CD4-positive, alpha-beta memory T cell (primary cell): ENCODE measurements at regions of chr19 and their contacts with region 1.

Region 1: GRCh38 chr19:4267101-4267900 is 11.8 kb upstream of the SHD start:
- DNase-seq: peak; percentile 41 to 57 (median 46)
- H3K4me3 ChIP-seq: no peak overlapping the region
- H3K4me3 Mint-ChIP-seq: no peak overlapping the region
- H3K27ac ChIP-seq: no peak overlapping the region
- H3K27ac Mint-ChIP-seq: peak overlapping the region in 6 of 7 donors; percentile 22 to 93 (median 76)
- H3K4me1 ChIP-seq: peaks cover 7% of the 10 kb centered on the region
- H3K4me1 Mint-ChIP-seq: peaks cover 12 to 19% (median 15%) of the 10 kb centered on the region in 4 donors
- H3K27me3 ChIP-seq: no peaks in the 10 kb centered on the region
- H3K27me3 Mint-ChIP-seq: no peaks in the 10 kb centered on the region

Region 2: GRCh38 chr19:4256563-4256962 is 10.7 kb before region 1 on chr19:
- CTCF ChIA-PET with region 1: interaction called, 10 read pairs
- POLR2A ChIA-PET with region 1: no interaction called
- intact Hi-C with region 1: no loop called
- DNase-seq: no peak
- H3K4me3 ChIP-seq: no peak overlapping the region
- H3K4me3 Mint-ChIP-seq: no peak overlapping the region
- H3K27ac ChIP-seq: no peak overlapping the region
- H3K27ac Mint-ChIP-seq: peak overlapping the region in 1 of 7 donors; percentile 38
- H3K4me1 ChIP-seq: no peaks in the 10 kb centered on the region
- H3K4me1 Mint-ChIP-seq: peaks cover 0 to 4% (median 3%) of the 10 kb centered on the region in 4 donors
- H3K27me3 ChIP-seq: no peaks in the 10 kb centered on the region
- H3K27me3 Mint-ChIP-seq: no peaks in the 10 kb centered on the region

Region 3: GRCh38 chr19:4310247-4311121 is 43.2 kb after region 1 on chr19:
- CTCF ChIA-PET with region 1: no interaction called
- POLR2A ChIA-PET with region 1: no interaction called
- intact Hi-C with region 1: no loop called
- DNase-seq: no peak
- H3K4me3 ChIP-seq: no peak overlapping the region
- H3K4me3 Mint-ChIP-seq: no peak overlapping the region
- H3K27ac ChIP-seq: no peak overlapping the region
- H3K27ac Mint-ChIP-seq: no peak overlapping the region
- H3K4me1 ChIP-seq: no peaks in the 10 kb centered on the region
- H3K4me1 Mint-ChIP-seq: peaks cover 0 to 4% (median 1%) of the 10 kb centered on the region in 4 donors
- H3K27me3 ChIP-seq: no peaks in the 10 kb centered on the region
- H3K27me3 Mint-ChIP-seq: peaks cover 0 to 6% of the 10 kb centered on the region in 2 donors

Region 4: DNA sequence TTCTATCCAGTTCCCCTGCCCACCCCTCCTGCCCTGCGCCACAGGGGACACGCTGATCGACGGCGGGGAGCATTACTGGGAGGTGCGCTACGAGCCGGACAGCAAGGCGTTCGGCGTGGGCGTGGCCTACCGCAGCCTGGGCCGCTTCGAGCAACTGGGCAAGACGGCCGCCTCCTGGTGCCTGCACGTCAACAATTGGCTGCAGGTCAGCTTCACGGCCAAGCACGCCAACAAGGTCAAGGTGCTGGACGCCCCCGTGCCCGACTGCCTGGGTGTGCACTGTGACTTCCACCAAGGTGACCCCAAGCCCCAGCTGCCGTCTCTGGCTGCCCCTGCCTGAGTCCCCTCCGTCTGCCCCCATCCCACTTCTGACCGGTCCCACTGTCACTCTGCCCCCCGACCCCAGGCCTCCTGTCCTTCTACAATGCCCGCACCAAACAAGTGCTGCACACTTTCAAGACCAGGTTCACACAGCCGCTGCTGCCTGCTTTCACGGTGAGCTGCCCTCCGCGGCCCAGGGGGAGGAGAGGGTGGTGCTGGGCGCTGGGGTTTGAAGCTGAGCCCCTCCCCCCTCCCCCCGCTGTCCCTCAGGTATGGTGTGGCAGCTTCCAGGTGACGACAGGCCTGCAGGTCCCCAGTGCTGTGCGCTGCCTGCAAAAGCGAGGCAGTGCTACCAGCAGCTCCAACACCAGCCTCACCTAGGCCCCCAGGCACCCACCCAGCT is 55.8 kb after region 1 on chr19:
- CTCF ChIA-PET with region 1: interaction called, 17 read pairs
- POLR2A ChIA-PET with region 1: no interaction called
- intact Hi-C with region 1: loop called (anchors 1 kb)
- DNase-seq: no peak
- H3K4me3 ChIP-seq: no peak overlapping the region
- H3K4me3 Mint-ChIP-seq: no peak overlapping the region
- H3K27ac ChIP-seq: no peak overlapping the region
- H3K27ac Mint-ChIP-seq: no peak overlapping the region
- H3K4me1 ChIP-seq: peaks cover 15% of the 10 kb centered on the region
- H3K4me1 Mint-ChIP-seq: peaks cover 8 to 18% (median 15%) of the 10 kb centered on the region in 4 donors
- H3K27me3 ChIP-seq: no peaks in the 10 kb centered on the region
- H3K27me3 Mint-ChIP-seq: no peaks in the 10 kb centered on the region

Region 5: DNA sequence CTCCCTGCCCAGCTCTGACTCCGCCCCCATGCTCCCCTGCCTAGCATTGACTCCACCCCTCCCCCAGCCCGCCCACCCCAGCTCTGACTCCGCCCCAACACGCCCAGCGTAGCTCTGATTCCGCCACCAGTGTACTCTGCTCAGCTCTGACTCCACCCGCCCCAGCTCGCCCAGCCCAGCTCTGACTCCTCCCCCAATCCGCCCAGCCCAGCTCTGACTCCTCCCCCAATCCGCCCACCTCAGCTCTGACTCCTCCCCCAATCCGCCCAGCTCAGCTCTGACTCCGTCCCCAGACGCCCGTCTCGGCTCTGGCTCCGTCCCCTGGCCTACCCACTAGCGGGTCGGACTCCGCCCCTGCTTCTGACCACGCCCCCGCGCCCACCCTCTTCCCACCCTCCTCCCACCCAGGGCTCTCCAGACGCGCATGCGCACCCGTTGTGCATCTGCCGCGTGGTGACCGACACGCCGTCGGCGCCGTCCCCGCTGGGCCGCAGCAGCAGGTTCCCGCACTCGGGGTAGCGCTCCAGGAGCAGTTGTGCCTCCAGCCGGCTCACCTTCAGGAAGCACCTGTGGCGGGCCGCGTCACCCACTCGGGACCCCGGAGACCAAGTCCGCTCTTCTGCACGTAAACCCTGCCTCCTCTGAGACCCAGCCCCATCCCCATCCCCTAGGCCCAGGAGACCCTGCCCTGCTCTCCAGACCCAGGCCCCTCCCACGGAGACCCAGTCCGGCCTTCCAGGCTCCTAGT is 61.1 kb after region 1 on chr19:
- CTCF ChIA-PET with region 1: no interaction called
- POLR2A ChIA-PET with region 1: no interaction called
- intact Hi-C with region 1: loop called (anchors 1 kb)
- DNase-seq: peak; percentile 88 to 93 (median 92)
- H3K4me3 ChIP-seq: peak overlapping the region; percentile 59 to 61
- H3K4me3 Mint-ChIP-seq: peak overlapping the region; percentile 77 to 91 (median 82)
- H3K27ac ChIP-seq: no peak overlapping the region
- H3K27ac Mint-ChIP-seq: peak overlapping the region; percentile 72 to 99 (median 89)
- H3K4me1 ChIP-seq: peaks cover 19% of the 10 kb centered on the region
- H3K4me1 Mint-ChIP-seq: peaks cover 8 to 29% (median 20%) of the 10 kb centered on the region in 4 donors
- H3K27me3 ChIP-seq: no peaks in the 10 kb centered on the region
- H3K27me3 Mint-ChIP-seq: peaks cover 0 to 3% of the 10 kb centered on the region in 2 donors

Region 6: DNA sequence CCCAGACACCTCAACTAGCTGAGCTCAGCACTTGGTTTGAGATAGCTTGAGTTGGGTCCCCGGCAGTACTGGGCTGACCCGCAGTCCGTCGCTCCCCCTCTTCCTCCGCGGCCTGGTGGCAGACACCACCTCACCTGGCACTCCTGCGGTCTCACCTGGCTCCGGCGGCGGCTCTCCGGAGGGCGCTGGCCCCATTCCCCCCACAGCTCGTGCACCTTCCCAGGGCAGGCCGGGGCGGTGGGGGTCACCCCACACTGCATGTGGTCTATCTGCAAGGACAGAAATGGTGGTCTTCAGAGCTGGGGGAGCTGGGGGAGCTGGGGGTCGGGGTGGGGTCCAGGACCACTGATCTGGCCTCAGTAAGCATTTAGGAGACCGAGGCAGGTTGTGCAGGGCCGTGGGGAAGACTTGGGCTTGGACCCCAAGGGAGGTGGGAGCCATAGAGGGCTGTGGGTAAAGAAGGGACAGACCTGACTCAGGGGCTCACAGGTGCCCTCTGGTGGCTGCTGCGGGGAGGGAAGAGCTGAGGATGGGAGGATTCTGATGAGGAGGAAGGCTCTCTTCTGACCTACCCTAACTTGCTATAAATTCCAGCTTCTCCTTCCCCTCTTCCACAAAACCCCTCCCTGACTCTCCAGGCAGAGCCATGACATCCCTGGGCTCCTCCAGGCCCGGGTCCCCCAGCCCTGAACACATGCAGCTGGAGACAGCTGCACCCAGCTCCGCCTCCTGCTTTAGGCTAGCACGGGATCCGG is 257.7 kb after region 1 on chr19:
- CTCF ChIA-PET with region 1: interaction called, 19 read pairs
- POLR2A ChIA-PET with region 1: no interaction called
- intact Hi-C with region 1: no loop called
- DNase-seq: peak; percentile 42 to 63 (median 50)
- H3K4me3 ChIP-seq: no peak overlapping the region
- H3K4me3 Mint-ChIP-seq: no peak overlapping the region
- H3K27ac ChIP-seq: no peak overlapping the region
- H3K27ac Mint-ChIP-seq: no peak overlapping the region
- H3K4me1 ChIP-seq: no peaks in the 10 kb centered on the region
- H3K4me1 Mint-ChIP-seq: no peaks in the 10 kb centered on the region
- H3K27me3 ChIP-seq: no peaks in the 10 kb centered on the region
- H3K27me3 Mint-ChIP-seq: peaks cover 5 to 10% of the 10 kb centered on the region in 2 donors